GM12878 (cell line): ENCODE measurements at regions of chr5 and their contacts with region 1.

Region 1: GRCh38 chr5:134289509-134290113 is 63.7 kb upstream of the PPP2CA start:
- DNase-seq: peak; percentile 24
- ATAC-seq: peak; percentile 96
- H3K4me3 ChIP-seq: no peak overlapping the region
- H3K27ac ChIP-seq: no peak overlapping the region
- H3K4me1 ChIP-seq: no peaks in the 10 kb centered on the region
- H3K27me3 ChIP-seq: no peaks in the 10 kb centered on the region
- CTCF ChIP-seq: peak; percentile 61 to 84 (median 63)
- EP300 ChIP-seq: no peak
- POLR2A ChIP-seq: no peak
- RAD21 ChIP-seq: peak; percentile 94

Region 2: DNA sequence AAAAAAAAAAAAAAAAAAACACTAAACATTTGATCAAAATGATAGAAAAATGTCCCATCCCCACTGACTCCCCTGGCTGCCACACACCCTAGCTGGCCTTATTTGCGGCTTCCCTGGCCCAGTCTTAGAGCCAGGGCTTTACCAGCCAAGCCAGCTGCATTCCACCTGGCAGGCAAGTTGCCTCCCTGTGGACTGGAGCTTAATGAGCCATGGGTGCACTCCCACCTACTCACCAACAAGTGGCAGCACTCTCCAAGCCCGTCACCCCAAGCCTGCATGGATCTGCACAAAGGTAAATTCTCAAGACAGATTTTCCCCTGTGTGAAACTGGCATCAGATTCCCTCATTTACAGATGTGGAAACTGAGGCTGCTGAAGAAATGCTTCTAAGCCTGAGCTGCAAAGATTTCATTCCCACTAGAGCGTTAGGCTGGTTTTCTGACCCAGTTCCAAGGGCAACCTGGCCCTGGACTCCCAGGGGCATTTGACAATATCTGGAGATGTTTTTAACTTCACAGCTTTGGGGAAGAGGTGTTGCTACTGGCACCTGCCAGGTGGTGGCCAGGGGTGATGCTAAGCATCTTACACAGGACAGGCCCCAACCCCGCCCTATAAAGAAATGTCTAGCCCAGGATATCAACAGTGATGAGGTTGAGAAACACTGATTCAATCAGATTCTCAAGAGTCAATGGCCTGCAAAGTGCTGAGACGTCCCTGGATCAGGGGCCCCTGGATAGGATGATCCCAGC is 262.9 kb before region 1 on chr5:
- CTCF ChIA-PET with region 1: interaction called, 5 read pairs
- POLR2A ChIA-PET with region 1: no interaction called
- RAD21 ChIA-PET with region 1: no interaction called
- SMC1A ChIA-PET with region 1: interaction called, 3 read pairs
- in situ Hi-C with region 1: loop called (anchors 5 kb)
- intact Hi-C with region 1: no loop called
- DNase-seq: no peak
- ATAC-seq: peak; percentile 95
- H3K4me3 ChIP-seq: no peak overlapping the region
- H3K27ac ChIP-seq: no peak overlapping the region
- H3K4me1 ChIP-seq: peaks cover 17% of the 10 kb centered on the region
- H3K27me3 ChIP-seq: no peaks in the 10 kb centered on the region; a peak in 2 of 4 replicates
- CTCF ChIP-seq: peak; percentile 76 to 79 (median 78)
- EP300 ChIP-seq: no peak
- POLR2A ChIP-seq: no peak
- RAD21 ChIP-seq: peak; percentile 72

Region 3: DNA sequence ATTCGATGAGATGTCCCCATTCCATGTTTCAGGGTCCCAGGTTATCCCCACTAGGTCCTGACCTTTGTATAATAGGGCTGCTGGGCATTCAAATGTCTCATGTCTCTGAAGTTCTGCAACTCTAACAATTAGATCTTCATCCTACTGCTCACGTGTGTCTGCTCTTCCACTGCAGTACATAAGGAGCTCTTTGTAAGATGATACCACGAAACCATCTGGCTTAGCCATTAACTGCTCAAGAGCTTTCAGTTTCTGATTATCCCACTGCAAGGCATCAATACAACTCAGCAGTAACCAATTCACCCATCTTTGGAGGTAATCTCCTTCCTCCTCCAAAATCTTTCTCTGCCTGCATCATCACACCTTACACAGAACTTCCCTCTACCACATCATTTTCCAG is 13.8 kb before region 1 on chr5:
- CTCF ChIA-PET with region 1: interaction called, 28 read pairs
- POLR2A ChIA-PET with region 1: no interaction called
- RAD21 ChIA-PET with region 1: interaction called, 3 read pairs
- SMC1A ChIA-PET with region 1: interaction called, 10 read pairs
- in situ Hi-C with region 1: no loop called
- intact Hi-C with region 1: no loop called
- DNase-seq: peak; percentile 37
- ATAC-seq: peak; percentile 97
- H3K4me3 ChIP-seq: no peak overlapping the region
- H3K27ac ChIP-seq: no peak overlapping the region
- H3K4me1 ChIP-seq: no peaks in the 10 kb centered on the region
- H3K27me3 ChIP-seq: no peaks in the 10 kb centered on the region
- CTCF ChIP-seq: no peak
- EP300 ChIP-seq: no peak
- POLR2A ChIP-seq: no peak
- RAD21 ChIP-seq: no peak

Region 4: DNA sequence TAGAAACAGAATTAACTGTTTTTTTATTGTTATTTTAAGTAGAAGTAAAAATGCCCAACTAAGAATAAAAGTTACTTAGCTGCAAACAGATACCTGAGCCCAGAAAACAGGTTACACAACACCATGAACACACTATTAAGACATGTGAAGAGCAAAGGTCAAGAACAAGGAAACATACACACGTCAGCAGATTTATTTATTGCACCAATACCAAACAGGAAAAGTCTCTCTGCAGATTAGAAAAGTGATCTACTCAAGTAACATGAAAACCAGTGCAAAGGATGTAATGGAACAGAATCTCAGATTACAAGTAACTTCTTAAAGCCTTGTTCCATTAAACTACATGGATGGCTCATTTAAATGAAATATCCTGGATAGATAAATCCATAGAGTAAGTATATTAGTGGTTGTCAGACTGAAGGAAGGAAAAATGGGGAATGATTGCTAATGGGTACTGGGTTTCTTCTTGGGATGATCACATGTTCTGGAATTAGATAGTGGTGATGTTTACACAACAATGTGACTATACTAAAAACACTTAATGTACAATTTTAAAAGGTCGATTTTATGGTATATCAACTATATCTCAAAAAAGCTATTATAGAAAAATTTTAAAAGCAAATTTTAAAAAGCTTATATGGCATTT is 336.9 kb after region 1 on chr5:
- CTCF ChIA-PET with region 1: no interaction called
- POLR2A ChIA-PET with region 1: no interaction called
- RAD21 ChIA-PET with region 1: no interaction called
- SMC1A ChIA-PET with region 1: no interaction called
- in situ Hi-C with region 1: no loop called
- intact Hi-C with region 1: no loop called
- DNase-seq: no peak
- ATAC-seq: peak; percentile 53
- H3K4me3 ChIP-seq: no peak overlapping the region
- H3K27ac ChIP-seq: no peak overlapping the region
- H3K4me1 ChIP-seq: peaks cover 3% of the 10 kb centered on the region; the same call in 1 of the 2 replicates
- H3K27me3 ChIP-seq: no peaks in the 10 kb centered on the region
- CTCF ChIP-seq: no peak
- EP300 ChIP-seq: no peak
- POLR2A ChIP-seq: no peak
- RAD21 ChIP-seq: no peak